PC-3 (cell line): ENCODE measurements at regions of chr13 and their contacts with region 1.

Region 1: DNA sequence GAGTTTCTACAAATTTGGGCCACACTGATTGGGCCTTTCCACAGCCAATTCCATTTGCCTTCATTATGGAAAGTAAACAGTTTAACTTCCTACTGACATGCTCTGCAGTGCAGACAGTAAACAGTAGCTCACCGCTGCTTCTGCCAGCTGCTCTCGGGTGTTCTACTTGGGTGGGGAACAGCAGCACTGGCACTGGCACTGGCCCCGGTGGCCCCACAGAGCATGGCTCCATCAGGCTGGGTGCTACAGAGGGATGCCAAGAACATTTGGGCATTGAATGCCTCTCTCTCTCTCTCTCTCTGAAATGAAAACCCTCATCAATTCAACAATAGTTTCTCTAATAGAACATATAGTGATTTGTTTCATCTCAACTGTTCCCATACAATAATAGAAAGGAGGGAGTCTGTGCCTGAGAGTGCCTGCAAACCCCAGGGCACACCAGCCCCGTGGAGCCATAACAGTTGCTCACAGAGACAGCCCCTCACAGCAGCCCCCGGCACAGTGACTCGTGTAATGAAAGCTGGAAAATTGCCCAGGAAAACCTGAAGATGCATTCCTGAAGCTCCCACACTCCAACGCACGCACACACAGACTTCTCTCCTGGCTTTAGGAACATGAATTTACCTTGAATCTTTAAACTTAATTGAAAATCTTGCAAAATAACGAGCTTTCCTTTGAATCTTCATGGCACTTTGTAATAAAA is 38.2 kb upstream of the GJB6 start:
- DNase-seq: no peak
- ATAC-seq: no peak
- H3K4me3 ChIP-seq: no peak overlapping the region
- H3K27ac ChIP-seq: no peak overlapping the region
- H3K4me1 ChIP-seq: 0 out of 2 replicates have a peak, but pooled peaks cover 8% of the 10 kb centered on the region
- H3K27me3 ChIP-seq: no peaks in the 10 kb centered on the region
- CTCF ChIP-seq: no peak

Region 2: DNA sequence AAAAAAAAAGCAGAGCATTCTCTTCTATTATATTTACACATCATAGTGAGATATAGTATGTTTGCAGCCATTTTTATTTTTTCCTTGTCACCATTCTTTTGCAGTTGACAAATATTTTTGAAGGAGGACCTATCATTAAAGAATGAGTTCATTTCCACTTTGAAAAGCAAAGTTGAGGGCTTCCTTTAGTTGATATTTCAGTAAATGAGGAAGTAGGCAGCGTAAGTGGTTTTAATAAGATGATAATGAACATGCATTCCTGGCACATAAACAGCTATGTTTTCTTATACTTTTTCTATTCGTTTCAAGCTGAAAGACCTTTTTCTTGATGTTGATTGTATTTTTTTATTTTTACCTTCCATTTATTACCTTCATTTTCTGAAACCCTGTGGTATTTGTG is 245.6 kb before region 1 on chr13:
- CTCF ChIA-PET with region 1: no interaction called
- POLR2A ChIA-PET with region 1: no interaction called
- intact Hi-C with region 1: no loop called
- DNase-seq: no peak
- ATAC-seq: no peak
- H3K4me3 ChIP-seq: no peak overlapping the region
- H3K27ac ChIP-seq: no peak overlapping the region
- H3K4me1 ChIP-seq: peaks cover 13% of the 10 kb centered on the region
- H3K27me3 ChIP-seq: no peaks in the 10 kb centered on the region
- CTCF ChIP-seq: no peak

Region 3: GRCh38 chr13:20247403-20247802 is 22.9 kb before region 1 on chr13:
- CTCF ChIA-PET with region 1: no interaction called
- POLR2A ChIA-PET with region 1: no interaction called
- intact Hi-C with region 1: loop called (anchors 1 kb)
- DNase-seq: no peak
- ATAC-seq: no peak
- H3K4me3 ChIP-seq: no peak overlapping the region
- H3K27ac ChIP-seq: no peak overlapping the region
- H3K4me1 ChIP-seq: no peaks in the 10 kb centered on the region
- H3K27me3 ChIP-seq: no peaks in the 10 kb centered on the region
- CTCF ChIP-seq: no peak

Region 4: DNA sequence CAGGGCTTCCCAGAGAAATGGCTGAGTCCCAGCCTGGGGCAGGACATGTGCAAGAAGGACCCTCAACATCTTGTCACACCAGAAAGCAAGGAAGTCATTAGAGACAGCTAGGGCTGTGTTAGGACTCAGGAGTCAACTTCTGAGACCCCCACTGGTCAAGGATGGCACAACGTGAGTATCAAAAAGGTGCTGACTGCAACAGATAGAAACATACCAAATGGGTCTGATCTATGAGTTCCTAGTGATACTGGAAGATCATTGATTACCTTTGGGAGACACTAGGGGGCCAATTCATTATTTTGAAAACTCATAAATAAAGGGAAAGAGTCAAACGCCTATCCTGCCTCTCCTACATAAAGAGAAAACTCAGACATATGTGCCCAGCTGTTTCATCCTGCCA is 35.3 kb after region 1 on chr13:
- CTCF ChIA-PET with region 1: no interaction called
- POLR2A ChIA-PET with region 1: no interaction called
- intact Hi-C with region 1: no loop called
- DNase-seq: peak; percentile 15
- ATAC-seq: no peak
- H3K4me3 ChIP-seq: no peak overlapping the region
- H3K27ac ChIP-seq: no peak overlapping the region
- H3K4me1 ChIP-seq: no peaks in the 10 kb centered on the region
- H3K27me3 ChIP-seq: no peaks in the 10 kb centered on the region
- CTCF ChIP-seq: peak; percentile 48; the same call in 1 of the 2 replicates

Region 5: DNA sequence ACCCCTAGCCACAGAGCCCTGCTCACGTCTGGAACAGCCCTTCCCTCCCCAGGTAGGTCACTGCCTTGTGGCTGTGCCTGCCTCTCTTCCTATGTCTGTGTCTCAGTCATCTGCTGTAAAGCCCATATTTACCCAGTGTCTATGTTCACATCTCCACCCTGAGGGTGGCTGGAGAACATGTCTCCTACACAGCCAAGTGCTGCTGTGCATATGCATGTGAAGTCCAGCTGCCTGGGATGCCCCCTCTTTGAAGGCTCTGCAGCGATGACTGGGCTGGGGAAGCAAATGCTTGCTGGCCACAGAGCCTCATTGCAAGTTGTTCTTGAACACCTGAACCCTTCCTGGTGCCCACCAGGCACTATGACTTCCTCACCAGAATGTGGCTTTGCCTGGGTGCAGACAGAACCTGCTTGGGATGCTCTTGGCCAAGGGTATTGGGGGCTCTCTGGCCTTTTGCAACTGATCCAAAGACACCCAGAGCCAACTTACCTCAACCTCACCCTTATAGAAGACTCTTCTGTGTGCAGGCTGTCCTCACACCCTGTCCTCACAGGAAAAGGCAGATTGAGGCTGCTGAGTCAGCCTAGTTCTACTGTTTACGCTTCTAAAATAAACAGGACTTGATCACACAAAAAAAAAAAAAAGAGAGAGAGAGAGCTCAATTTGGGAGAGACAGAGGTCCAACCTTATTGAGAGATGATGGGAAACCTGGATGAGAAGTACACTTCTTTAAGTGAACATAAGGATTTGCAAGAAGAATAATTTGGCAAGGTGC is 932.6 kb after region 1 on chr13:
- CTCF ChIA-PET with region 1: no interaction called
- POLR2A ChIA-PET with region 1: no interaction called
- intact Hi-C with region 1: no loop called
- DNase-seq: peak; percentile 51
- ATAC-seq: peak; percentile 94
- H3K4me3 ChIP-seq: no peak overlapping the region
- H3K27ac ChIP-seq: no peak overlapping the region
- H3K4me1 ChIP-seq: peaks cover 7% of the 10 kb centered on the region
- H3K27me3 ChIP-seq: no peaks in the 10 kb centered on the region
- CTCF ChIP-seq: no peak